WTC11 (cell line): ENCODE measurements at regions of chr2 and their contacts with region 1.

Region 1: DNA sequence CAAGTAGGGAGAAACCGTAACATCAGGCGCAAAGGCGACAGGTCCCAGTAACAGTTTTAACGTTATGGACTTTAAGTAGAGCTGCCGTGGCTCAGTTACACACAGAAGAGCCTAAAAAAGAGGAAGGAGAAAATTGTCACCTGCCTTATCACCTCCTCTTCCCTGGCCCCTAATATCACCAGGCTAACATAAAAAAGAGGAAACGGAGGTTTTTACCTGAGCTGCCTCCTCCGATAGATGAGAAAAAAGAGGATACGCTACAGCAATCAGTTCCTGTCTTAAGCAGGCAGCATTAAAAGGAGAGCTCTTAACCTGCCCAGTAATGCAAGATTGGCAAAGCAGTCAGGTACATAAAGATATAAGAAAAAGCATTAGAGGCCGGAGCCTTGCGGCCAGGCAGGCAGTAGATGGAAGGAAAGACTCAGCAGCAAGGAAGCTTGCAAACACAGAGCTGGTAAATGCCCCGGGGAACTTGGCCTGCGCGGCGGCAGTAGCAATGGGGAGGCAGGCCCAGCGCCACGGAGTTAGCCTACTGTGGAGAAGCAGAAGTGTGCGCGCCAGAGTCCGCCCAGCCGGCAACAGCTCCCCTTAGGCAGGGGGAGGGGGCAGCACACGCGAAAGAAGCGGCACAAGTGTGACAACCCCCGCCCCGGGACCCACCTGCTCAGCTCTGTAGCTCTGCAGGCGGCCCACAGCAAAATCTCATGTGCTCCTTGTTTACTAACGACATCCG is 116.3 kb upstream of the SCN7A start:
- DNase-seq: peak; percentile 66
- ATAC-seq: peak; percentile 81
- H3K4me3 Mint-ChIP-seq: peak overlapping the region; percentile 43
- H3K27ac Mint-ChIP-seq: no peak overlapping the region
- H3K4me1 Mint-ChIP-seq: peaks cover 43% of the 10 kb centered on the region
- H3K27me3 Mint-ChIP-seq: peaks cover 28% of the 10 kb centered on the region
- CTCF ChIP-seq: no peak

Region 2: GRCh38 chr2:166539340-166540162 is 70.8 kb before region 1 on chr2:
- CTCF ChIA-PET with region 1: interaction called, 28 read pairs
- POLR2A ChIA-PET with region 1: no interaction called
- DNase-seq: no peak
- ATAC-seq: peak; percentile 96
- H3K4me3 Mint-ChIP-seq: no peak overlapping the region
- H3K27ac Mint-ChIP-seq: no peak overlapping the region
- H3K4me1 Mint-ChIP-seq: 0 out of 2 replicates have a peak, but pooled peaks cover 3% of the 10 kb centered on the region
- H3K27me3 Mint-ChIP-seq: no peaks in the 10 kb centered on the region
- CTCF ChIP-seq: peak; percentile 76

Region 3: DNA sequence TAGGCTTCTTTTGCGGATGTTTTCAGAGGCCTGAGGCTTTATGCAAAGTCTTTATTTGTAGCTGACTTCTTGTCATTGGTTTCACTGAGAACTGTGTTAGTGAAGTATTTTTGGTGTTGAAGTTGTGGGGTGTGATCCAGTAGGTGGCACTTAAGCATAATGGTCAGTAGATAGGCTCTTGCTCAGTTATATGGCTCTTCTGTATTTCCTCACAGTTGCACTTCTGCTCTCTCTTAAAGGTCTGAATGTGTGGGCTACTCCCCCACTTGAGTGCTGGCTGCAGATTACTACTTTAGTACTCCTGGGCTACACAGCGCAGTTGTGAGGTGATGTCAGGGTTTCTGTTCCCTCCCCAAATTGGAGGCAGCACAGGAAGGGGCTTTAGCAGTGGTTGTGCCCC is 17.5 kb after region 1 on chr2:
- CTCF ChIA-PET with region 1: interaction called, 21 read pairs
- POLR2A ChIA-PET with region 1: no interaction called
- DNase-seq: no peak
- ATAC-seq: peak; percentile 17
- H3K4me3 Mint-ChIP-seq: no peak overlapping the region
- H3K27ac Mint-ChIP-seq: peak overlapping the region; percentile 20; the same call in 1 of the 2 replicates
- H3K4me1 Mint-ChIP-seq: peaks cover 22% of the 10 kb centered on the region
- H3K27me3 Mint-ChIP-seq: no peaks in the 10 kb centered on the region
- CTCF ChIP-seq: no peak

Region 4: DNA sequence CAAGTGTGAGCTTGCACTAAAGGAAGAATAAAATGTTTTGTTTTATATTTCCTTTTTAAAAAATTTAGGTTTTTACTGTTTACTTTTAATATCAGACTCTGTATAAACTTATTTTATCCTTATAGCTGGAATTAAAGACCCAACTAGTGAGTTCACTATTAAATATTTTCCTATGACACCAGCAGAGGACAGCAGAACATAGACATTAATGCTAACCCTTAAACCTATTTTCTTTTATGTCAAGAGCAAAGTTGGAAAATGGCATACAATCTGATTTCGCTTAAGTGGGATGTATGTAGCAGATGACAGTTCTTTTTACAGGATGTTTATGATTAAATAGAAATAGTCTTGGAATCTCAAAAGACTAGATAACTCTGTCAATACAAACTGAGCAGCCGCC is 89.7 kb after region 1 on chr2:
- CTCF ChIA-PET with region 1: no interaction called
- POLR2A ChIA-PET with region 1: no interaction called
- DNase-seq: no peak
- ATAC-seq: no peak
- H3K4me3 Mint-ChIP-seq: no peak overlapping the region
- H3K27ac Mint-ChIP-seq: no peak overlapping the region
- H3K4me1 Mint-ChIP-seq: 0 out of 2 replicates have a peak, but pooled peaks cover 3% of the 10 kb centered on the region
- H3K27me3 Mint-ChIP-seq: no peaks in the 10 kb centered on the region
- CTCF ChIP-seq: no peak